K562 (cell line): ENCODE measurements at regions of chr21 and their contacts with region 1.

Region 1: GRCh38 chr21:26513212-26513611 is 59.9 kb downstream of the CYYR1 start:
- DNase-seq: no peak
- ATAC-seq: no peak
- H3K4me3 ChIP-seq: no peak overlapping the region
- H3K27ac ChIP-seq: no peak overlapping the region
- H3K4me1 ChIP-seq: no peaks in the 10 kb centered on the region
- H3K27me3 ChIP-seq: no peaks in the 10 kb centered on the region
- CTCF ChIP-seq: no peak
- EP300 ChIP-seq: no peak
- POLR2A ChIP-seq: no peak
- RAD21 ChIP-seq: no peak

Region 2: DNA sequence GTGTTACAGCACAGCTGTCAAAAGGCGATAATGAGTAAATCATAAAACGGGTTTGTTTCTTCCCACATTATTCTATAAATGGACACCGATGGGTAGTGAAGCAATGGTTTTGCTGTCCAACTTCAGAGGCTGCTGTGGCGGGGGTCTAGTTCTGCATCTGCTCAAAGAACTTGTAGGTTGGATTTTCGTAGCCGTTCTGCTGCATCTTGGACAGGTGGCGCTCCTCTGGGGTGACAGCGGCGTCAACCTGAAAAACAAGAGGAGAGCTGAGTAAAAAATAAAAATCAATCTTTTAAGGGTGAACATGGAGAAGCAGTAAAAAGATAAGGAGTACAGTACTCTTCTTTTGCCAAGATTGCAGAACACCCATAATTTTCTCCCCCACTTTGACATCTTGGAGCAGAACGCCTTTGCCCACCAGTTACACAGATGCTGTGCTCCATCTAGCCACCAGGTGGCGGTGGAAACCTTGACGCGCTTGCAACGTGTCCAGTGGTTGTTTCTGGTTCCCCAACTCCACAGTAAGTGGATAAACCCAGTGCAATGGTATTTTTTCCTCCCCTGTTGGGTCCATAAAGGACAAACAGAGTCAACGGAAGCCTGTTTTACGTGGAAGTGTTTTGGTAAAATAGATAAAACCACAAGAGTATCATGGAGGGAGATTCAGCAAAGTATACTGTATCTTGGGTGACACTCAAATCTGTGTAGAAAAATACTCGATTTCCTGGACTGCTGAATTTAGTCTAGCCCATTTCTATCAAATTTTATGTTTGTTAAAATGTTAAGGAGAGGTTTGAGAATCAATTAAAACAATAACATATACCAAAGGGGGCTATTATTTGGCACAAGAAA is 631.5 kb before region 1 on chr21:
- CTCF ChIA-PET with region 1: no interaction called
- POLR2A ChIA-PET with region 1: no interaction called
- in situ Hi-C with region 1: no loop called
- intact Hi-C with region 1: loop called (anchors 5 kb)
- DNase-seq: peak; percentile 63 to 75 (median 75)
- ATAC-seq: peak; percentile 97
- H3K4me3 ChIP-seq: no peak overlapping the region
- H3K27ac ChIP-seq: no peak overlapping the region
- H3K4me1 ChIP-seq: no peaks in the 10 kb centered on the region
- H3K27me3 ChIP-seq: no peaks in the 10 kb centered on the region
- CTCF ChIP-seq: peak; percentile 87 to 93 (median 91)
- EP300 ChIP-seq: no peak
- POLR2A ChIP-seq: no peak
- RAD21 ChIP-seq: peak; percentile 84 to 87